Right ventricle myocardium inferior (tissue), 1 donor: ENCODE measurements at regions of chr16 and their contacts with region 1.

Region 1: GRCh38 chr16:2867987-2868789 is 10.2 kb upstream of the PRSS22 start:
- DNase-seq: peak; percentile 96
- ATAC-seq: peak; percentile 98

Region 2: GRCh38 chr16:2692948-2693651 is 175.1 kb before region 1 on chr16:
- intact Hi-C with region 1: loop called (anchors 10 kb)
- DNase-seq: peak; percentile 65
- ATAC-seq: peak; percentile 1

Region 3: GRCh38 chr16:2752035-2752849 is 115.9 kb before region 1 on chr16 and contains the start of gene SRRM2:
- intact Hi-C with region 1: loop called (anchors 2 kb)
- DNase-seq: peak; percentile 98
- ATAC-seq: peak; percentile 96
- total RNA-seq, gene SRRM2: 239 TPM

Region 4: DNA sequence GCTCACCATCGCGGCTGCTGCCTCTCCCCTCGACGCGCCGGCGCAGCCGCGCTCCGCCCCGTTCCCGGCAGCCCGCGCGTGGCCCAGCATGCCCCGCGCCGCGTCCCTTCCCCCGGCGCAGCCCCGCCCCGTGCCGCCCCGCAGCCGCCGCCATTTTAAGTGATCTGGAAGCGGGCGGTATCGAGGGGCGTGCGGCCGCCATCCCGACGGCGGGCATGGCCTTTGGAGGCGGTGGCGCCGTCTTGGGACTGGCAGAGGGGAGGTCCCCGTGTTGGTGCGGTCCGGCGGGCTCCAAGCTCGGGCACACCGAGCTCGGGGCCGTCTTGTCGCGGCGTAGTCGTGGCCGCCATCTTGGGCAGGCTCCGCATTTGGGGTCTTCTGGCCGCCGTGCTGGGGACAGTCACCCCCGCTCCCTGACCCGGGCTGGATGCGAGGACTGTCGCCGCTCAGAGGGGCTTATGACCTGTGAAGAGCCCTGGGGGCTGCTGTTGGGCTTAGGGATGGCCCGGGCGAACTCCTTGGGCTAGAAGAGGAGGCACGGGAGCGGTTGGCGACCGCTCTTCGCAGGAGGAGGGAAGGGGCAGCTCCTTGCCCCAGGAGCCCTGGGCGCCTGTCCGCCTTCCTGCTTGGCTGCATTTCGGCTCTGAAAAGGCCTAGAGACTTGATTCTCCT is 90.8 kb before region 1 on chr16 and contains the start of gene ELOB:
- intact Hi-C with region 1: loop called (anchors 1 kb)
- DNase-seq: peak; percentile 96
- ATAC-seq: peak; percentile 95
- total RNA-seq, gene ELOB: 336 TPM

Region 5: GRCh38 chr16:2838928-2839327 is 29.3 kb before region 1 on chr16:
- intact Hi-C with region 1: loop called (anchors 1 kb)
- DNase-seq: no peak
- ATAC-seq: peak; percentile 55